Posterior vena cava (tissue), 2 donors: ENCODE measurements at regions of chr16 and their contacts with region 1.

Region 1: GRCh38 chr16:3143612-3144320 is 8.9 kb downstream of the ZNF213 start:
- DNase-seq: peak; percentile 82

Region 2: GRCh38 chr16:2811703-2812471 is 331.9 kb before region 1 on chr16:
- intact Hi-C with region 1: loop called in 1 of 2 experiments (anchors 5 kb)
- DNase-seq: peak; percentile 61

Region 3: DNA sequence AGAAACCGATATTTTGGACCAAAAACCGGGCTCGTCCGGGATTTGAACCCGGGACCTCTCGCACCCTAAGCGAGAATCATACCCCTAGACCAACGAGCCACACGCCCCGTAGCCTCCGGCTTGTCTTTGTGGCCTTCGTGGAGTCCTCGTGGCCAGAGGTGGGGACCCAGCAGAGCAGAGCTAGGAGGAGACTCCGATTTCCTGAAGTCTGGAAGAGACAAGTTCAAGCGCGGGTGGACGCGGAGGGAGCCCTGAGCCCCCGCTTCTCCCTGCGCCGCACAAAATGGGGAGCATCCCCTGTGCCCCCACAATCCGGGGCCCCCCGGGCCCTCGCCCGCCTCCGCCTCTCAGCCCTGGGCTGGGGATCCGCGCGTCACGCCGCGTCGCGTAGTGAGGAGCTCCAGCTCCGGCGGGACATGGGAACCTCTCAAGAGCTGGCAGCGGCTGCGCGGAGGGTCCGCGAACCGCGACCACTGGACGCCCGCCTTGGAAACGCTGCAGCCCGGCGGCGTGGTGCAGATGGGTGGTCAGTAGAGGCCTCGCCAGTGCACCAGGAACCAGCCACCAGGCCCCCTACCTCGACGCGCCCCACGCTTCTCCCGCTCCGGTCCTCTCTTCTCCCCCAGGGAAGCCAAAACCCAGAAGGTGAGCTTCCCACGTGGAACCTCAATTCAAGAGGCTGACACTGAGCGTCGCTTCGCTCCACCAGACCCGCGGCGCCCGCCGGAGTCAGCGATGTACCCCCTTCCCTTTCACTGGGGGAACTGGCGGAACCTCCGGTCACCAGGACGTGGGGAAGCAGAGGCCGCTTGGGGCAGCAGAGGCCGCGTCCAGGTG is 39.1 kb after region 1 on chr16:
- intact Hi-C with region 1: loop called in 1 of 2 experiments (anchors 1 kb)
- DNase-seq: peak; percentile 81